ENCODE measurements at regions of chr1 and their contacts with region 1.

Region 1: GRCh38 chr1:12619792-12620487 is 1.9 kb upstream of the DHRS3 start:
- DNase-seq: peak; percentile 69
- H3K4me3 Mint-ChIP-seq: peak overlapping the region; percentile 97
- H3K27ac Mint-ChIP-seq: peak overlapping the region; percentile 69
- H3K4me1 Mint-ChIP-seq: peaks cover 45% of the 10 kb centered on the region
- H3K27me3 Mint-ChIP-seq: no peaks in the 10 kb centered on the region

Region 2: DNA sequence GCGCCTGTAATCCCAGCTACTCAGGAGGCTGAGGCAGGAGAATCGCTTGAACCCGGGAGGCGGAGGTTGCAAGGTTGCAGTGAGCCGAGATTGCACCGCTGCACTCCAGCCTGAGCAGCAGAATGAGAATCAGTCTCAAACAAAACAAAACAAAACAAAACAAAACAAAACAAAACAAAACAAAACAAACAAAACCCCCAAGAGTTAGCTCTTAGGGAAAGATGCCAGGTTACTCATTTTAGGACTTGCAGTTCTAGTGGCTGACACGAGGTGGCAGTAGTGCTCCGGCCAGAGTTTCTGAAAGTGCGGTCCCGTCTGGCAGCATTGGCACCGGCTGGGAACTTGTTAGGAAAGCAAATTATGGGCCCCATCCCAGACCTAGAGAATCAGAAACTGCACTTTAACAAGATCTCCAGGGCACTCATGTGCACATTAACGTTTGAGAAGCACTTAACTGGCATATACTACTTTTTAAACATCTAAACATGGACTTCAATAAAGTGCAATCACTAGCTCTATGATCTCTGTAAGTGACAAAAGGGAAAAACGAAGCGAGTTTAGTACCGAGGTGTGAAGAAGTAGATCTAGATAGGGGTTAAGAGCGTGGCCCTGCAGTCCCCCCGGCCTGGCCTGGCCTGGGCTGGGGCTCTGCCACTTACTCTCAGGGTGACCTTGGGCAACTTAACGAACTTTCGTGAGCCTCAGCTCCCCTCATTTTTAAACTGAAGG is 495.1 kb before region 1 on chr1:
- intact Hi-C with region 1: loop called (anchors 2 kb)
- DNase-seq: peak; percentile 71
- H3K4me3 Mint-ChIP-seq: peak overlapping the region; percentile 20
- H3K27ac Mint-ChIP-seq: peak overlapping the region; percentile 80
- H3K4me1 Mint-ChIP-seq: peaks cover 49% of the 10 kb centered on the region
- H3K27me3 Mint-ChIP-seq: no peaks in the 10 kb centered on the region

Region 3: DNA sequence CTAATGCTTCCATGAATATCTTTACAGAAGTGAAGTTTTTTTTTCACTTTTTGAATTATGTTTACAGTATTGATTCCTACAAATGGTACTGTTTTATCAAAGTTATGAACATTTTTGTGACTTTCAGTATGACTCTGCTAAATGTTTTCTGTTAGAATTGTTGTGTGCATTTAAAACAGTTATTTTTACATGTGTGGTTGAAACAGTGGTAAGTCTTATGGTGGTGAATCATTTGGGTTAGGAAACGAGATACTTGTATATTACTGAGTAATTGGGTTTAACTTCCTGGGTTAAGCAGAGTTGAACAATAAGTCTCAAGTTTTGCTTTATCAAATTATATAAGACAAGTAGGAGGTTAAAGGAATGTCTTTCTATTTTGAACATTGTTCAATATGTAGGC is 323.3 kb before region 1 on chr1:
- intact Hi-C with region 1: loop called (anchors 1 kb)
- DNase-seq: no peak
- H3K4me3 Mint-ChIP-seq: peak overlapping the region; percentile 50
- H3K27ac Mint-ChIP-seq: peak overlapping the region; percentile 72
- H3K4me1 Mint-ChIP-seq: peaks cover 46% of the 10 kb centered on the region
- H3K27me3 Mint-ChIP-seq: no peaks in the 10 kb centered on the region

Region 4: GRCh38 chr1:12380326-12381249 is 239.4 kb before region 1 on chr1:
- intact Hi-C with region 1: loop called (anchors 1 kb)
- DNase-seq: no peak
- H3K4me3 Mint-ChIP-seq: no peak overlapping the region
- H3K27ac Mint-ChIP-seq: no peak overlapping the region
- H3K4me1 Mint-ChIP-seq: peaks cover 52% of the 10 kb centered on the region
- H3K27me3 Mint-ChIP-seq: no peaks in the 10 kb centered on the region

Region 5: DNA sequence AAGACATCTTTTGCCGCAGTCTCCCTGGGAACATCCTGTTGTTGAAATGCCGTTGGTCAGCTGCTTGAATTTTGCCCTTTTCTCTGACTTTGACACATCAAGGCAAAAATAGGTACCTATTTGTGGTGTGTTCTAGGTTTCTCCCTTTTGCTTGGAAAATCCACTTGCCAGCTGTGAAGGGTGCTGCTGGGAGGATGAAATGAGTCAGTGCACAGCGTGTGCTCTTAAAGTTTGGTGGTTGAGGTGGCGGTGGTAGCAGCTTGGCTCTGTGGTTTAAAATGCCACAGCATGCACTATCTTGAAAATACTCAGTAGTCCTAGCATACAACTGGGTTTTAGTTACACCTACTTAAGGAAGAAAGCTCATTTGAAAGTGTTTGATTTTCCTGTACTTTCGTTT is 185.8 kb before region 1 on chr1:
- intact Hi-C with region 1: loop called (anchors 1 kb)
- DNase-seq: peak; percentile 70
- H3K4me3 Mint-ChIP-seq: peak overlapping the region; percentile 32
- H3K27ac Mint-ChIP-seq: peak overlapping the region; percentile 92
- H3K4me1 Mint-ChIP-seq: peaks cover 67% of the 10 kb centered on the region
- H3K27me3 Mint-ChIP-seq: peaks cover 3% of the 10 kb centered on the region

Region 6: DNA sequence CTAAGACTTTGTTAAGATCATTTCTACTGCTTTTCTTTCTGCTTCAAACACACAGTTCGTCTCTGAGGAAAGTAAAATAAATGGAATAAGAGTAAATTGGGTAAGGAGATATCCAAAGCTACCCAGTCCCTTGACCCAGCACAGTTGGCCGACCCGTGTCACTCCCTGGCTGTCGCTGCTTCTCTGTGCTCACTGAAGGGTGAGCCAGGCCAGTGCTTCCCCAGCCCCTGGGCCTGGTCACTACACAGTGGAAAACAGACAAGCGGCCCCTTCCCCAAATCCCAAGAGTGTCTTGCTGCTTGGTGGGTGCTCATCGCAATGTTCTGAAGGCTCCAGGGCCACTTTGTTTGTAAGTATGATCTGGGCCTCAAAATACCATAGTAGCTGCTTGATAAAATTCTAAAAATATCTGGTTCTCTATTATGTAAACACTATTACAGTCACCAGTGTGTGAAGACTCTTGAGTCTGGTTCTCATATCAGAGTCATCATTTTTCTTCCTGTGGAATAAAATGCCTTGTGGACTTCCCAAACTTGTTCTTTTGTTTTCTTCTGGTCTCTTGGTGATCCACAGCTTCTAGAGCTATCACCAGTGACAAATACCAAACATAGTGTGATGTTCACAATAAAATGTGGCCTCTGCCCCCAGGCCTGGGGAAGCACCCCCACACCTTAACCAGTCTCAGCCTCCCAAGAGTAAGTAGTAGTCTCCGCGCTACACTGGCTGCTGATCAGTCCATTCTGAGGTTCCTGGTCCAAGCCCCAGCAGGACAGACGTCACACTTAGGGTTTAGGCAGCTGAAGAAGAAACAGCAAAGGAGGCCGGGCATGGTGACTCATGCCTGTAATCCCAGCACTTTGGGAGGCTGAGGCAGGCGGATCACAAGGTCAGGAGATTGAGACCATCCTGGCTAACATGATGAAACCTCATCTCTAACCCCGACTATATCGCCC is 108.1 kb before region 1 on chr1:
- intact Hi-C with region 1: loop called (anchors 1 kb)
- DNase-seq: no peak
- H3K4me3 Mint-ChIP-seq: peak overlapping the region; percentile 87
- H3K27ac Mint-ChIP-seq: peak overlapping the region; percentile 100
- H3K4me1 Mint-ChIP-seq: peaks cover 60% of the 10 kb centered on the region
- H3K27me3 Mint-ChIP-seq: no peaks in the 10 kb centered on the region

Region 7: GRCh38 chr1:12658531-12659453 is 38.9 kb after region 1 on chr1:
- intact Hi-C with region 1: loop called (anchors 1 kb)
- DNase-seq: peak; percentile 51
- H3K4me3 Mint-ChIP-seq: peak overlapping the region; percentile 40
- H3K27ac Mint-ChIP-seq: no peak overlapping the region
- H3K4me1 Mint-ChIP-seq: peaks cover 7% of the 10 kb centered on the region
- H3K27me3 Mint-ChIP-seq: peaks cover 20% of the 10 kb centered on the region

Measured in activated T-helper 1 cell treated with anti-CD3 and anti-CD28 coated beads, Interleukin-12 subunit alpha, Interleukin-12 subunit beta, Interleukin-2, Interleukin-4 antibody, amounts not matched to agents 30 ng/mL and 10 ng/mL and 1 ng/mL, durations not matched to agents 14 hours and 24 hours and 36 hours (primary cell).